ENCODE measurements at regions of chr3 and their contacts with region 1.

Region 1: DNA sequence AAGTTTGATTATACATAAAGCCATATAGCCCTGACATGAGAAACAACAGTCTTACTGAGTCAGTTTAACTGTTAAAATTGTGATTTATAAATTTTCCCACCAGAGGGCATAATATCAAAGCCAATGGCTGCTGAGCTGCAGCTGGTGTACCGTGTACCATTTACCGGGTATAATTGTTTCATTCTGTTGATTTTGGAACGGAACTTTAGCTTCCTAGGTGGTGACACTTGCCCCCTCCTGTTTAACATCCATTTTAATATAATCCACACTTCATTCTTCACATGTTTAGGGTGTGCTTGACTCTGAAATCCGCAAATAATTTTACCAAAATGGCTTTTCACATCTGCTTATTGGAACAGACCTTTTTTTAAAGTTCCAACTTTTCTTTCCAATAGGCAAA is 72.8 kb downstream of the SLC9A9 start:
- DNase-seq: peak; percentile 22
- ATAC-seq: peak; percentile 91
- H3K4me3 ChIP-seq: no peak overlapping the region
- H3K27ac ChIP-seq: no peak overlapping the region
- H3K4me1 ChIP-seq: no peaks in the 10 kb centered on the region
- H3K27me3 ChIP-seq: peaks cover under 1% of the 10 kb centered on the region; the same call in 1 of the 2 replicates
- CTCF ChIP-seq: peak; percentile 74

Region 2: DNA sequence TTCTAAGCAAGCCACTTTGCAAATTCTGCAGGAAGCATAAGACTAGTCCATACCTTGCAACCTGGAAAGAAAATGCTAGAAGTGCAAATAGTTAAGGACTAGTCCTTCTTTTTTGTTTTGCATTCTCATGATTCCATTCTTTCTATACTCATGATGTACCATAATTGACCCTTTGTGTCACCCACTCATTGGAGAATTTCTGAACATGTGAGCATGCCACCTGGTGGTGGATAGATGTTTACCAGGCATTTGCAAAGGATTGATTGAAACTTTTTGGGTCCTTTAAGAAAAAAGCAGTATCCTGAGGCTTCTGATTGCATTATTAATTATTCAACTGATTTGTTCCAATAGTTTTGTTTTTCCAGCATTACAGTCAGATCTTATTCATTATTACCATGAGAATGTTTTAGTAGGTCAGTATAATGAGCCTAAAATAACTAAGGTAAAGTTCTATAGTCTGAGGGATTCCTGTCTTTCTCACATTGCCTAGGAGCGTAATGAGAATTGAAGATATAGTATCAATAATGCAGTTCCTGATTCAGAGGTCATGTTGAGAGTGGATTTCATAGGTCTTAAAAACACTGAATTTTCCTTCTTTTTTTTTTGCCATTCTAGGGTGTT is 176.0 kb after region 1 on chr3:
- CTCF ChIA-PET with region 1: no interaction called
- POLR2A ChIA-PET with region 1: no interaction called
- in situ Hi-C with region 1: no loop called
- intact Hi-C with region 1: loop called (anchors 5 kb)
- DNase-seq: no peak
- ATAC-seq: no peak
- H3K4me3 ChIP-seq: no peak overlapping the region
- H3K27ac ChIP-seq: no peak overlapping the region
- H3K4me1 ChIP-seq: no peaks in the 10 kb centered on the region
- H3K27me3 ChIP-seq: no peaks in the 10 kb centered on the region
- CTCF ChIP-seq: peak; percentile 68; the same call in 1 of the 2 replicates